B cell (primary cell): ENCODE measurements at regions of chr6 and their contacts with region 1.

Region 1: DNA sequence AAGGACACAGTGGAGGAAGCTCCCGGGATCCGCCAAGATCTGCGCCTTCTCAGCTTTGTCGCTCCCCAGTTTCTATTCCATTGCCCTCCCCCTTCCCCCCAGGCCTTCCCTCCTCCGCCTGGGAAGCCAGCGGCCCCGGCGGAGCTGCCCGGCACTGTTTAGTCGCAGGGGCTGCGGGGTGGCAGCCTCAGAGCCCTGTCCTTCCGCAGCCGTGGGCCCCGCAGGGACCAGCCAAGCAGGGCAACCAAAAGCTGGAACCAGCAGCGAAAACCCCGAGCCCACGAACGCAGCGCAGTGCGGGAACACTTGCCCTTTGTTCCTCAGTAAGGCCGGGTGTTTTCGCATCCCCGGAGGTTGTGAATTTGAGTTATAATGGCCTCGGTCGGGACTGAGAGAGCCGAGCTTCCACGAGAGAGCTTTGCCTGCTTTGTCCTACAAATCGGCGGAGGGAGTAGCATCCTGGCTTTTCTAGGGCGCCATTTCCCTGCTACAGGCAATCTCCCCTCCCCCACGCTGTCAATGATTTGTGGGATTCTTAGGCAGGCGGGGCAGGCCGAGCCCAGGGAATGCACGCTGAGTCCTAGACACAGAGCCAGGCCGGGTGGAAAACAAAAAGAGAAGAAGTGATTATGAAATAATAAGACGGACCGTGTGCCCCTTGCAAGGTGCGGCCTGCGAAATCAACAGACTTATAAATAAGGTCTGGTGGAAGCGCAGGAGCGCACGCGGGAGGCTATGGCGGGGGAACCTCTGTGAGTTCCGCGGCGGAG is 4.0 kb upstream of the TUBB2B start:
- DNase-seq: no peak
- ATAC-seq: no peak
- H3K4me3 ChIP-seq: peak overlapping the region in 3 of 5 experiments; percentile 13 to 46 (median 33)
- H3K4me3 Mint-ChIP-seq: peak overlapping the region; percentile 49
- H3K27ac ChIP-seq: no peak overlapping the region
- H3K27ac Mint-ChIP-seq: no peak overlapping the region
- H3K4me1 ChIP-seq: peaks cover 55 to 57% of the 10 kb centered on the region in 2 donors
- H3K4me1 Mint-ChIP-seq: peaks cover 49% of the 10 kb centered on the region
- H3K27me3 ChIP-seq: peaks cover 0 to 79% (median 61%) of the 10 kb centered on the region in 4 experiments
- H3K27me3 Mint-ChIP-seq: peaks cover 78% of the 10 kb centered on the region
- CTCF ChIP-seq: no peak

Region 2: DNA sequence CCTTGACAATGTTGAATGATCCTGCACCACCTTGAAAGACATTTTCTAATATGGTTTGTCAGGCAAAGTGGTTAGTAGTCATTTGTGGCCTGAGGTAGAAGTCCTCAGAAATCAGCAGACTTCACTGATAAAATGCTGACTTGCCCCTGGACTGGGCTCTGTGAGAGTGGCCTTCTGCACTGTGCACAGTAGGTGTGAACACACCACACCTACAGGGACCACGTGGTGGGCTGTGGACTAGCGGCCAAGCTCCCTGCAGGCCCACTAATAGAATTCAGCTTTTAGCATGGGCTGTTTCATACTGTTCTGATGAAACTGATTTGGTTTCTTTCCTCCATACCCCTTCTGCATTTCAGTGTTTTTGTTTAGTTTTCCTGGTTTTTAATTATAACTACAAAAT is 105.6 kb before region 1 on chr6:
- CTCF ChIA-PET with region 1: interaction called, 3 read pairs
- POLR2A ChIA-PET with region 1: no interaction called
- intact Hi-C with region 1: loop called (anchors 1 kb)
- DNase-seq: no peak
- ATAC-seq: no peak
- H3K4me3 ChIP-seq: no peak overlapping the region
- H3K4me3 Mint-ChIP-seq: no peak overlapping the region
- H3K27ac ChIP-seq: no peak overlapping the region
- H3K27ac Mint-ChIP-seq: no peak overlapping the region
- H3K4me1 ChIP-seq: peaks cover 0 to 12% of the 10 kb centered on the region in 2 donors
- H3K4me1 Mint-ChIP-seq: peaks cover 10% of the 10 kb centered on the region
- H3K27me3 ChIP-seq: no peaks in the 10 kb centered on the region
- H3K27me3 Mint-ChIP-seq: no peaks in the 10 kb centered on the region
- CTCF ChIP-seq: no peak

Region 3: DNA sequence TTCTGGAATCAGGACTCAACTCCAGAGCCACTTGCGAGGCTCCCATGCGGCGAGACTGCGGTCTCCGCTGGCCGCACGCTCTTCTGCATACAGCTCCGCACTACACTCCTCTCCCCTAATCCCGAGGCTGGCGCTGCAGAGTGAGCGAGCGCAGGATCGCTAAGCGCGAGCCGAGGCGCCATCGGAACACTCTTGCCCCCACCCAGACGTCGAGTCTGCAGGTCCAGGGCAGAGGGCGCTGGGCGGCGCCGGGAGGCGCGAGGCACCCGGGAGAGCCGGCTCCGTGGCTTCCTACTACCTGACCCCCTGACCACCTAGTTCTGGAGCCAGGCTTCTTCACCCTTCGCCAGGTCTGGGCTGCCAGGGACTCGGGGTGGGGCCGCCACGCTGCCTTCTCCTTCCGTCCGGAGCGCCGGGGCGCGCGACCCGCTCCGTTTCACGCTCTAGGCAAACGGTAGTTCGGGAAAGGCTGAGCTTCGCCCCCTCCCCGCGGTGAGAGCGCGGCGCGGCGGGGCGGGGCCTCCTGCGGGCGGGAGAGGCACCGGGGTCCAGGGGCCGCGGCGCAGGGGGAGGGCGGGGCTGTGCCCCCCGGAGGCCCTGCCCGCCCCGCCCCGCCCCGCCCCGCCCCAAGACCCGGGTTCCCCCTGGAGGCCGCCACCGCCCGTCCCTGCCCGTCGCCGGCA is 68.7 kb before region 1 on chr6:
- CTCF ChIA-PET with region 1: interaction called, 11 read pairs
- POLR2A ChIA-PET with region 1: interaction called, 4 read pairs
- intact Hi-C with region 1: loop called (anchors 1 kb)
- DNase-seq: peak; percentile 81
- ATAC-seq: peak; percentile 79
- H3K4me3 ChIP-seq: peak overlapping the region in 4 of 5 experiments; percentile 71 to 81 (median 78)
- H3K4me3 Mint-ChIP-seq: peak overlapping the region; percentile 83
- H3K27ac ChIP-seq: peak overlapping the region in 1 of 2 donors; percentile 51
- H3K27ac Mint-ChIP-seq: peak overlapping the region; percentile 71
- H3K4me1 ChIP-seq: peaks cover 10 to 18% of the 10 kb centered on the region in 2 donors
- H3K4me1 Mint-ChIP-seq: peaks cover 23% of the 10 kb centered on the region
- H3K27me3 ChIP-seq: peaks cover 0 to 10% (median 0%) of the 10 kb centered on the region in 4 experiments
- H3K27me3 Mint-ChIP-seq: peaks cover 4% of the 10 kb centered on the region
- CTCF ChIP-seq: no peak

Region 4: GRCh38 chr6:3324262-3324942 is 93.0 kb after region 1 on chr6:
- CTCF ChIA-PET with region 1: no interaction called
- POLR2A ChIA-PET with region 1: no interaction called
- intact Hi-C with region 1: no loop called
- DNase-seq: no peak
- ATAC-seq: peak; percentile 10
- H3K4me3 ChIP-seq: no peak overlapping the region
- H3K4me3 Mint-ChIP-seq: no peak overlapping the region
- H3K27ac ChIP-seq: no peak overlapping the region
- H3K27ac Mint-ChIP-seq: no peak overlapping the region
- H3K4me1 ChIP-seq: no peaks in the 10 kb centered on the region
- H3K4me1 Mint-ChIP-seq: no peaks in the 10 kb centered on the region
- H3K27me3 ChIP-seq: peaks cover 0 to 3% (median 1%) of the 10 kb centered on the region in 4 experiments
- H3K27me3 Mint-ChIP-seq: peaks cover 32% of the 10 kb centered on the region
- CTCF ChIP-seq: no peak